PC-9 (cell line): ENCODE measurements at regions of chr17 and their contacts with region 1.

Region 1: DNA sequence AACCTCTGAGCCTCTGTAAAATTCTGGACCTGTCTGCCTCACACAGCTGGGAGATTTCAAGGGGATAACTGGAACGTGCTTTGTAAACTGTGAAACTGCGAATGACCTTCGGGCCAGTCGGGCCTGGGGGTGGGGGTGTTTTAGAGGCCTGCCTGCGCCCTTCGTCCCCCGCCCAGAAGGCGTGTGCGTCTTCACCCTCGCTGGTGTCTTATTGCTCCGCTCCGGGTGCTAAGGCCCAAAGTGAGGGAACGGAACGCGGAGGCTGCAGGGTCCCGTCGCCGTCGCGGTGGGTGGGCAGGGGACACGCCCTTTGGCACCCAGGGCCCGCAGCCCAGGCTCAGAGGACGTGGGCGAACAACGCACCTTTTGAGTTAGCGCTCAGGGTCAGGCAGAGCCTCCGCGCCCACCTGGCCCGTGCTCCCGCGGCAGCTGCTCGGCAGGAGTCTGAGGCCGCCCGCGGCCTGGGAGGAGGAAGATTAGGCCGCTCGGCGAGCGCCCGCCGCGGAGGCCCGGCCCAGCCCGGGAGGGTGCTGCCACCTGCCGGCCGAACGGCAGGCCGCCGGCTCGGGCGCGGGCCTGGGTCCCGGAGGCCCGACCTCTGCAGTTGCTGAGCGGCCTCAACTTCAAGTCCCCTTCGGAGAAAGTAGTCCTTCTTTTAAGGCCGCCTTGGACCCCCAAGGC is 29.7 kb downstream of the DCAKD start:
- DNase-seq: peak in 1 of 2 experiments; percentile 56
- H3K4me3 ChIP-seq: no peak overlapping the region
- H3K27ac ChIP-seq: no peak overlapping the region
- H3K4me1 ChIP-seq: peaks cover 4% of the 10 kb centered on the region
- H3K27me3 ChIP-seq: 0 out of 2 replicates have a peak, but pooled peaks cover 4% of the 10 kb centered on the region
- CTCF ChIP-seq: peak; percentile 72

Region 2: DNA sequence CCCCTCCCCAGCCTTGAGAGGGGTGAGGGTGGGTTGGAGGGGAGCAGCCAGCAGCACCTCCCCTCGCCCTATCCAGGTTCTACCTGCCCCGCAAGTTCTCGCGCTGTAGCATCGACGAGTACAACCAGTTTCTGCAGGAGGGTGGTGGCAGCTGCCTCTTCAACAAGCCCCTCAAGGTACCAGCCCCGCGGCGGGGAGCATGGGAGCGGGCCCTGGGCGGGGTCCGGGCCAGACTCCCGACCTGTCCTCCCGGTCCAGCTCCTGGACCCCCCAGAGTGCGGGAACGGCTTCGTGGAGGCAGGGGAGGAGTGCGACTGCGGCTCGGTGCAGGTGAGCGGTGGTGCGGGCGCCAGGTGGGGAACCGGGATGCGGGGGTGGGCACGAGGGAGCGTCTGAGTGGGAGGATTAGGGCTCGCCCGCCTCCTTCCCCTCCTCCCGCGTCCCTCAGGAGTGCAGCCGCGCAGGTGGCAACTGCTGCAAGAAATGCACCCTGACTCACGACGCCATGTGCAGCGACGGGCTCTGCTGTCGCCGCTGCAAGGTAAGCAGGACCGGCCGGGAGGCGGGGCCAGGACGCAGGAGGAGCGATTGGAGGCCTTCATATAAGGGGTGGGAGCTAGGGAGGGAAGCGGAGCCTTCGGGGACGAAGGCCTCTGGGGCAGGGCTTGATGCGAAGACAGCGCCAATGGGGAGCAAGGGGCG is 246.5 kb before region 1 on chr17:
- CTCF ChIA-PET with region 1: no interaction called
- POLR2A ChIA-PET with region 1: no interaction called
- intact Hi-C with region 1: loop called (anchors 2 kb)
- DNase-seq: peak in 1 of 2 experiments; percentile 95
- H3K4me3 ChIP-seq: peak overlapping the region; percentile 81
- H3K27ac ChIP-seq: no peak overlapping the region
- H3K4me1 ChIP-seq: peaks cover 8% of the 10 kb centered on the region; the same call in 1 of the 2 replicates
- H3K27me3 ChIP-seq: no peaks in the 10 kb centered on the region
- CTCF ChIP-seq: peak; percentile 21; the same call in 1 of the 2 replicates

Region 3: DNA sequence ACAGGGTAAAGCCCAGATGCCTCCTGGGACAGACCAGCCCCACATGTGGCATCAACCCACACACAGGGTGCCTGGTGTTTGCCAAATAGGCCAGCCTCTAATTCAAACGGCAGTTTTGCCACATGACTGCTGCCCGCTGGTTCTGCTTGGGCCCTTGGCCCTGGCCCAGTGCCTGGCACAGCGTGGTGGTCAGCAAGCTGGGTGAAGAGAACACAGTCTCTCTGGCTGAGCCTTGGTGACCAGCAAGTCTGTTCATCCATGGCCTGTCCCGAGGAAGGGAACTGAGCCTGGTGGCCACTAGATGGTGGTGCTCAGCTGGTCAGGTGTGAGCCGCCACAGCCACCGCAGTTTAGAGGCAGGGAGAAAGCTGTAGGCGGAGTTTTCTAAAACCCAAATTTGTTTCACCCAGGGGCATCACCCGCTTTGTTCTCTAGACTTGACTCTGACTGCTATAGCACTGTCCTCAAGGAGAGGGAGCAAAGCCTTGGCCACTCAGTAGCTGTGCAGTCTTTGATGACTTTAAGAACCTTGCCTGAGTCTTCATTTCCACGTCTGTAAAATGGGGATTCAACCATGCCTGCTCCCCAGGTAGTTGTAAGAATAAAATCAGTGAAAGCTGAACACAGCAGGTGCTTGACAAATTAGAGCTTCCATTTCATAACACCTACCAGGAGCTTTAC is 101.7 kb before region 1 on chr17:
- CTCF ChIA-PET with region 1: interaction called, 26 read pairs
- POLR2A ChIA-PET with region 1: no interaction called
- intact Hi-C with region 1: loop called (anchors 1 kb)
- DNase-seq: peak; percentile 64 to 74
- H3K4me3 ChIP-seq: no peak overlapping the region
- H3K27ac ChIP-seq: no peak overlapping the region
- H3K4me1 ChIP-seq: peaks cover 9% of the 10 kb centered on the region
- H3K27me3 ChIP-seq: peaks cover 8% of the 10 kb centered on the region; the same call in 1 of the 2 replicates
- CTCF ChIP-seq: peak; percentile 83

Region 4: DNA sequence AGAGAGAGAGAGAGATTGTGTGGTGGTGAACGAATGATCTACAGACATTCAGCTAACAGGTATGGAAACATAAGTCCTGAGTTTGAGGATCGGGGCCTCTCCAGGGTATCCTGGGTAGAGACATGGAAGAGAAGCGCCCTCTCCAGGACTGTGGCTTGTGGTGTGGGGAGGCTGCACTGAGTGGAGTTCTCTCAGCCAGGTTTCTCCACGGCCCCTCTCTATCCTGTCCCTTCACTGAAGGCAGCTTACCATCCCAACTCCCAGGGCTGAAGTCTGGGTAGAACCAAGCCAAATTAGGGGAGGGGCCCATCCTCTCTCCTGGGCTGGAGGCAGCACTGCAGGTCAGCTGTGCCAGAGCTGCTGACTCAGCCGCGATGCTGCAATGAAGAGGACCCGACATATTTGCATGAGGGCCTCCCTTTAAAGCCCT is 59.8 kb before region 1 on chr17:
- CTCF ChIA-PET with region 1: no interaction called
- POLR2A ChIA-PET with region 1: interaction called, 11 read pairs
- intact Hi-C with region 1: no loop called
- DNase-seq: no peak
- H3K4me3 ChIP-seq: no peak overlapping the region
- H3K27ac ChIP-seq: no peak overlapping the region
- H3K4me1 ChIP-seq: peaks cover 11% of the 10 kb centered on the region; the same call in 1 of the 2 replicates
- H3K27me3 ChIP-seq: peaks cover 11% of the 10 kb centered on the region; the same call in 1 of the 2 replicates
- CTCF ChIP-seq: no peak

Region 5: DNA sequence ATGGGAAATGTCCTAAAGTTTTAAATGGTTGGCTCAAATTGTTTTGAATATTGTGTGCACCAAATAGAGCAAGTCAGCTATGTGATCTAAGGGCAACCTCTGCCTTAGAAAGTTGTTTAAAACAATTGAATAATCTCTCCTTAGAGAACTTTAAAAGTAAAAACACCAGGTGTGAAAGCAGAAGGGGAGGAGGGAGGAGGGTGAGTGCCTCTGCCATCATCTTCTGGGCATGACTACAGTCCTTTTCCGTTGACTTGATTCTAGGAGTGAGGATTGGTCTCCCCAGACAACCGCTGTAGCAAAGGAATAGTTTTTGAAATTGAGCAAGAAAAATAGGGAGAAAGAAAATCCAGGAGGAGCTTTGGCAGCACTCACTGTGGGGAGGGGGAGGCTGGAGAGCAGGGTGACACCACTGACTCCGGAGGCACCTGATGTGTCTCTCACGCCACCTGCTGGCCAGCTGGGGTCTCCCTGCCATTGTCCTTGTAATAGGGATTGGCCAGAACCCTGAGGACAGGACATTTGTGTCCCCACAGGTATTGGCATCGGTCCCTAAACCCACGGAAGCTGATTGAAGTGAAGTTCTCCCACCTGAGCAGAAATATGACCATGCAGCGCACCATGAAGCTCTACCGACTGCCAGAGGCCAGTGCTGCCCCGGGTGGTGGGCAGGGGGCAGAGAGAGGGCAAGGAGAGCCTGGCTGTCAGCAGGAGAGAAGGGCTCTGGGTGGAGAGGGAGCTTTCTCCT is 77.3 kb after region 1 on chr17:
- CTCF ChIA-PET with region 1: no interaction called
- POLR2A ChIA-PET with region 1: no interaction called
- intact Hi-C with region 1: loop called (anchors 10 kb)
- DNase-seq: peak; percentile 61 to 81
- H3K4me3 ChIP-seq: no peak overlapping the region
- H3K27ac ChIP-seq: no peak overlapping the region
- H3K4me1 ChIP-seq: peaks cover under 1% of the 10 kb centered on the region; the same call in 1 of the 2 replicates
- H3K27me3 ChIP-seq: no peaks in the 10 kb centered on the region
- CTCF ChIP-seq: peak; percentile 91

Region 6: DNA sequence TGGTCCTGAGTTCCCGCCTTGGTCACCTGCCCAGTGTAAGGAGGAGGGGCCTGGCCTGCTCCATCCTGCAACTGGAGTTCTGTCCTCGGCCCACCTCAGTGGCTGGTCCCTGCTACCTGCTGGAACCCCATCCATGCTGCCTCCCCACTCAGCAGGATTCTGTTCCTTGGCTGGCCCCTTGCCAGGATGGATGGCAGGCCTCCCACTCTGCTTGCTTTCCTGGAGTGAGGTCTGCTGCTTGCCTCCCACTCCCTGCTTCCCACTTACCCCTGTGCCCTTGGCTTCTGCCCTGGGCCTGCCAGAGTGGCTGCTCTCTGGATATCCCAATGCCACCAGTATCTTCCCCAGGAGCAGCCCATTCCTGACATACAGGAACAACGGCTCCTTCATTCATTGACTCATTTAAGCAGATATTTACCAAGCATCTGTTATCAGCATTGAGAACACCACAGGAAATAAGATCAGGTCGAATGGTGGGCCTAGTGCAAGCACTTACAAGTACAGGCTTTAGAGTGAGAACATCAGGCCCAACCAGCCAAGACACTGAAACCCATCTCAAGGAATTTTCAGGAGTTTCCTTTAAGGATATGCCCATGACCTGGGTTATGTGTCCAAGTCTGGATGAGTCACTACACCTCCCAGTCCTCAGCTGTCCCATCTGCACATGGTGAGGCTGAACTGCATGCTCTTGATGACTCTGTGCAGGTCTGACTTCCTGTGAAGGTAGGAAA is 1974.3 kb after region 1 on chr17:
- CTCF ChIA-PET with region 1: no interaction called
- POLR2A ChIA-PET with region 1: no interaction called
- intact Hi-C with region 1: no loop called
- DNase-seq: no peak
- H3K4me3 ChIP-seq: no peak overlapping the region
- H3K27ac ChIP-seq: no peak overlapping the region
- H3K4me1 ChIP-seq: no peaks in the 10 kb centered on the region
- H3K27me3 ChIP-seq: no peaks in the 10 kb centered on the region
- CTCF ChIP-seq: no peak